Activated CD4-positive, alpha-beta T cell treated with anti-CD3 and anti-CD28 coated beads, Interleukin-2, amount 10 ng/mL, durations not matched to agents 24 days and 14 days (primary cell): ENCODE measurements at regions of chr4 and their contacts with region 1.

Region 1: DNA sequence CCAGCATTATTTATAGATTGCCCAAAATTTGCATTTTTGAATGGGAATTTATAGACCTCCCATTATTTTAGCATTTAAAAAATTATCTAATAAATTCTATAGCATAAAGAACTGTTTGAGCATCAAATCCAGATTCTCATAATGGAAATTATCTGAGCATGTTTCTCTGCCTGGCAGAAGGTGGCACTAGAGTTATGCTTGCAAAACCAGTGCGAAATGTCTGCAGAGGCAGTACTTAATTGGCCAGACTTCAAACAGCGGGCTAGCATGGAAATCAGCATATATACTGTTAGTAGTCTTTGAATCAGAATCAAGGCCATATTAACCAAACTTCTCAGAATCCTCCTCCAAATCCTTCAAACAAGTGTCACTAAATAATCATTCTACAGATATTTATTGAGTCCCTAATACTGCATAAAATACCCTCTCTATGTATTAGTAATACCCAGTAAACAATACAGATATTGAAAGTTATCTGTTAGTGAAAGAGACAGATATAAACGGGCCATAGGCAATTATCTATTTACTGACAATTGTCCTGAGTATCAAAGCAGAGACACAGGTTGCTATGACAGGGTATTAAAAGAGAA is 78.7 kb upstream of the DCLK2 start:
- DNase-seq: peak; percentile 58
- H3K4me3 Mint-ChIP-seq: no peak overlapping the region
- H3K27ac Mint-ChIP-seq: no peak overlapping the region
- H3K4me1 Mint-ChIP-seq: peaks cover 5% of the 10 kb centered on the region
- H3K27me3 Mint-ChIP-seq: peaks cover 9% of the 10 kb centered on the region

Region 2: GRCh38 chr4:150242820-150243458 is 243.4 kb after region 1 on chr4:
- intact Hi-C with region 1: loop called (anchors 5 kb)
- DNase-seq: peak; percentile 68
- H3K4me3 Mint-ChIP-seq: no peak overlapping the region
- H3K27ac Mint-ChIP-seq: no peak overlapping the region
- H3K4me1 Mint-ChIP-seq: no peaks in the 10 kb centered on the region
- H3K27me3 Mint-ChIP-seq: peaks cover 2% of the 10 kb centered on the region

Region 3: GRCh38 chr4:150867148-150867547 is 867.6 kb after region 1 on chr4:
- intact Hi-C with region 1: loop called (anchors 5 kb)
- DNase-seq: peak; percentile 86
- H3K4me3 Mint-ChIP-seq: no peak overlapping the region
- H3K27ac Mint-ChIP-seq: no peak overlapping the region
- H3K4me1 Mint-ChIP-seq: no peaks in the 10 kb centered on the region
- H3K27me3 Mint-ChIP-seq: no peaks in the 10 kb centered on the region